ENCODE measurements at regions of chr1 and their contacts with region 1.

Region 1: DNA sequence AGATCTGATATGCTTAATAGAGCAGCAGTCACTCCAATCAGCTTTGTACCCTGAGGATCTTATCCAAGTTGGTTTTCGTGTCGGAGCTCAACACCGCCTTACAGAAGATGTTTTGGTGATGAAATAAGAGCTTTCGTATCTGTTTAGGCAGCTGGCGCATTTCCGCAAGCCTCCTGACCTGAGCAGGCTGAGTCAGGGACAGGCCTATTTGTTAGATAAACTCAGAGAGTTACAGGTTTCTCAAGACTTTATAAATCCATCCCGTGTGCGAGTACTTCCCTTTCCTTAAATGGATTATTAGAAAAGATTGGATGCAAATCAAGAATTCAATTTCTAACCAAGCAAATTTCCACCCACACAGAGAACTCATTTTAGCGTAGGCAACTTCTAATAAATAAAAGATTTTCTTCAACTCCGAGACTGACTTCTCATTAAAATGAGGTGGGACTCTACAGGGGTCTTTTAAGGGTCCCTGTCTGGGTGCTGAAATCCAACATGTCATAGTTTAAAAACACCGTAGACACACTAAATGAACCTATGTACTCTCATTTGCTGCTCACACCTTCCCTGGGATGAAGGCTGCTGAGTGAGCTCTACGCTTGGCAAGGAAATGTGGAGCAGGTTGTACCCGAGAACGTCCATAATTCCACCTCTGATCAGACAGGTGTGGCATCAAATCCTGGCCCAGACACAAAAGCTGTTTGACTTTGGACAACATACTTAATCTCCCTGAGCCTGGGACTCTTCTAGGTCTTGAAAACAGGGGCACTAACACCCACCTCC is 106.9 kb upstream of the F3 start:
- DNase-seq: peak; percentile 98
- H3K4me3 ChIP-seq: peak overlapping the region in 1 of 3 experiments; percentile 1
- H3K27ac ChIP-seq: peak overlapping the region; percentile 90
- H3K4me1 ChIP-seq: peaks cover 61% of the 10 kb centered on the region
- H3K27me3 ChIP-seq: no peaks in the 10 kb centered on the region
- CTCF ChIP-seq: no peak

Region 2: GRCh38 chr1:94218332-94218731 is 430.1 kb before region 1 on chr1:
- CTCF ChIA-PET with region 1: no interaction called
- dilution Hi-C with region 1: no loop called
- in situ Hi-C with region 1: no loop called
- intact Hi-C with region 1: no loop called
- DNase-seq: no peak
- H3K4me3 ChIP-seq: no peak overlapping the region
- H3K27ac ChIP-seq: no peak overlapping the region
- H3K4me1 ChIP-seq: peaks cover 3% of the 10 kb centered on the region
- H3K27me3 ChIP-seq: no peaks in the 10 kb centered on the region
- CTCF ChIP-seq: no peak

Region 3: GRCh38 chr1:94541175-94542087 is 107.0 kb before region 1 on chr1 and contains the start of gene F3:
- CTCF ChIA-PET with region 1: no interaction called
- dilution Hi-C with region 1: loop called (anchors 5 kb)
- in situ Hi-C with region 1: no loop called
- intact Hi-C with region 1: loop called (anchors 1 kb)
- DNase-seq: peak; percentile 95
- H3K4me3 ChIP-seq: peak within 1 kb of the TSS; percentile 83 to 89 (median 87)
- H3K27ac ChIP-seq: peak within 1 kb of the TSS; percentile 89
- H3K4me1 ChIP-seq: peaks cover 31% of the 10 kb centered on the region
- H3K27me3 ChIP-seq: no peaks in the 10 kb centered on the region
- CTCF ChIP-seq: no peak
- total RNA-seq, gene F3: 994 to 1,649 TPM

Region 4: GRCh38 chr1:94622757-94623156 is 25.7 kb before region 1 on chr1:
- CTCF ChIA-PET with region 1: no interaction called
- dilution Hi-C with region 1: no loop called
- in situ Hi-C with region 1: no loop called
- intact Hi-C with region 1: loop called (anchors 1 kb)
- DNase-seq: peak; percentile 91
- H3K4me3 ChIP-seq: no peak overlapping the region
- H3K27ac ChIP-seq: peak overlapping the region; percentile 87
- H3K4me1 ChIP-seq: peaks cover 55% of the 10 kb centered on the region
- H3K27me3 ChIP-seq: no peaks in the 10 kb centered on the region
- CTCF ChIP-seq: no peak

Region 5: DNA sequence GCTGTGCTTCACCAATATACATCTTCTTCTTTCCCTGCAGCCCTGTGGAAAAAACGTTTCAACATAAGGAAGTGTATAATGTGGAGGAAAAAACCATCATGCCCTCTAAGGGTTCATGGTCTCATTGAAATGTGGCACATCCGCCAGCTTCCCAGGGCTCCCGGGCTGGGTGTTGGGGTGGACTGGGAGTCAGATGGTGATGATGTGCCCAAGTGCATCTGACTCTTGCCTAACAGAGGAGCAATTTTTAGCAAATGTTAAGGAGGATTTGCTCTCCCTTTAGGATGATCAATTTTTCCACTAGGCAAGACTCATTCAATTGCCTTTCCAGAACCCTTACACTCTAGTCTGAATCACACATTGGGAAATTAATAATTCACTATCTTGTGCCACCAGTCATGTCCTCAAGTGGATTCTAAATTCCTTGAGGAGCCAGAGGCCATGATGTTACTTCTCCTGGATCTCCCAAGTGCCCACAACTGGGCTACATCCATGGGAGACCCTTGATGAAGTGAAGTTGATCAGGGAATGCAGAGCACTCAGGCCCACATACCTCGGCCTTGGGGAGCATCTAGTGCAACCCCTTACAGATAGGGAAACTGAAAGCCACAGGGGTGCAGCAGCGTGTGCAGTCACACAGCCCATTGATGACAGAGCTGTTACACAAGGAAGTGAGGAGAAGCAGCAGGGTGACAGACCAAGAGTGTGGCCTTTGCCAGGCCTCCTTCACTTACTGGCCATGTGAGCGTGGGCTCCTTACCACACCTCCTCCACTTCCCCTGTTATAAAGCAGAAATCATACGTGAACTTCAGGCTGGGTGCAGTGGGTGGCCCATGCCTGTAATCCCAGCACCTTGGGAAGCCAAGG is 71.7 kb after region 1 on chr1:
- CTCF ChIA-PET with region 1: no interaction called
- dilution Hi-C with region 1: no loop called
- in situ Hi-C with region 1: loop called in 1 of 2 experiments (anchors 10 kb)
- intact Hi-C with region 1: no loop called
- DNase-seq: no peak
- H3K4me3 ChIP-seq: no peak overlapping the region
- H3K27ac ChIP-seq: no peak overlapping the region
- H3K4me1 ChIP-seq: peaks cover 3% of the 10 kb centered on the region
- H3K27me3 ChIP-seq: no peaks in the 10 kb centered on the region
- CTCF ChIP-seq: no peak

Region 6: DNA sequence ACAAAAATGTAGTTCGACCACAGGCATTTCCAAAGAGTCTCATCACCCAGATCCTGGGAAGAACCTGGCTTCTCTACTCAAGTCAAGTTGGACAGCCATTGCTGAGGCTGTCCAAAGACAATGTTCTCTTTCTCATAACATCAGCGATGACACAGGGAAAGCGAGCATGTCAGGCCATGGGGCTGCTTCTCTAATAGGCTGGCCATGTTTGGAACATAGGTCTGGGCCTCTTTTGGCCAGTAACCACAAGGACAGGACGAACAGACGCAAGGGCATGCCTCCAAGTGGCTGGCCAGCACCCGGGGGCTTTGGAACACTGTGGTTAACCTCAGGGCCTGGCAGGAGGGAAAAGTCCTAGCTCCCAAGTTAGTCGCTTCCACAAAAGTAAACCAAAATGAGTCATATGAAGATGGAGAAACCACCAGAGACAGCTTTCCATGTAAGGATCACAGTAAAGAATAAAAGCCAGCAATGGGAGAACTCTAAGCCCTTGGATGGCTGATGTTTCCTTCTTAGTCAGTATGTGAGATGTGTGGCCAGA is 91.2 kb after region 1 on chr1:
- CTCF ChIA-PET with region 1: no interaction called
- dilution Hi-C with region 1: no loop called
- in situ Hi-C with region 1: no loop called
- intact Hi-C with region 1: loop called (anchors 1 kb)
- DNase-seq: peak; percentile 95
- H3K4me3 ChIP-seq: no peak overlapping the region
- H3K27ac ChIP-seq: peak overlapping the region; percentile 65
- H3K4me1 ChIP-seq: peaks cover 67% of the 10 kb centered on the region
- H3K27me3 ChIP-seq: no peaks in the 10 kb centered on the region
- CTCF ChIP-seq: no peak

Region 7: GRCh38 chr1:95043141-95043980 is 394.9 kb after region 1 on chr1:
- CTCF ChIA-PET with region 1: interaction called, 13 read pairs
- dilution Hi-C with region 1: no loop called
- in situ Hi-C with region 1: no loop called
- intact Hi-C with region 1: no loop called
- DNase-seq: peak; percentile 65
- H3K4me3 ChIP-seq: no peak overlapping the region
- H3K27ac ChIP-seq: no peak overlapping the region
- H3K4me1 ChIP-seq: peaks cover 21% of the 10 kb centered on the region
- H3K27me3 ChIP-seq: no peaks in the 10 kb centered on the region
- CTCF ChIP-seq: peak; percentile 99

Measured in mammary epithelial cell (primary cell).